Endothelial cell of umbilical vein (primary cell): ENCODE measurements at regions of chr20 and their contacts with region 1.

Region 1: GRCh38 chr20:6265204-6265904 is 142.5 kb upstream of the FERMT1 start:
- DNase-seq: peak; percentile 82
- H3K4me3 ChIP-seq: peak overlapping the region in 1 of 3 experiments; percentile 59
- H3K27ac ChIP-seq: peak overlapping the region; percentile 18
- H3K4me1 ChIP-seq: peaks cover 10% of the 10 kb centered on the region
- H3K27me3 ChIP-seq: peaks cover 0 to 4% of the 10 kb centered on the region in 2 experiments
- CTCF ChIP-seq: peak; percentile 11 to 29
- POLR2A ChIP-seq: no peak

Region 2: DNA sequence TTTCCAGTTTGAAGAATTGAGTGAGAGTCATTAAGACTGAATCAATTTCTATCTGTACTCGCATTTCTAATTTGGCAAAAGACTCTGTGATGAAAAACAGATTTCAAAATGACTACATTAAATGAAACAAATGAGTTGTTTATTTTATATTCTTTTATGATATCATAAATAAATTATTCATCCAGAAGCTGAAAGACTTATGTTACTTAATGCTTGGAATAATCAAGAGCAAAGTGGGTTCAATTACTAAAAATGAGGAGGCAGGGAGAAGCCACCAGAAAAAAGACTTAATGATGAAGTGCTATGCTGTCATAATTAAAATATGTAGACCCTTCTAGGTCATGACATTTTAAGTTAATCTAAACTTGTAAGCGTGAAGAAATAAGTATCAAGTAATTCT is 12.0 kb before region 1 on chr20:
- CTCF ChIA-PET with region 1: interaction called, 14 read pairs
- POLR2A ChIA-PET with region 1: no interaction called
- dilution Hi-C with region 1: no loop called
- intact Hi-C with region 1: no loop called
- DNase-seq: no peak
- H3K4me3 ChIP-seq: no peak overlapping the region
- H3K27ac ChIP-seq: no peak overlapping the region
- H3K4me1 ChIP-seq: no peaks in the 10 kb centered on the region
- H3K27me3 ChIP-seq: peaks cover 2 to 7% of the 10 kb centered on the region in 2 experiments
- CTCF ChIP-seq: no peak
- POLR2A ChIP-seq: no peak

Region 3: GRCh38 chr20:6388671-6389197 is 123.4 kb after region 1 on chr20:
- CTCF ChIA-PET with region 1: no interaction called
- POLR2A ChIA-PET with region 1: no interaction called
- dilution Hi-C with region 1: no loop called
- intact Hi-C with region 1: no loop called
- DNase-seq: no peak
- H3K4me3 ChIP-seq: no peak overlapping the region
- H3K27ac ChIP-seq: no peak overlapping the region
- H3K4me1 ChIP-seq: no peaks in the 10 kb centered on the region
- H3K27me3 ChIP-seq: no peaks in the 10 kb centered on the region
- CTCF ChIP-seq: no peak
- POLR2A ChIP-seq: no peak

Region 4: GRCh38 chr20:6630514-6630913 is 365.2 kb after region 1 on chr20:
- CTCF ChIA-PET with region 1: interaction called, 12 read pairs
- POLR2A ChIA-PET with region 1: no interaction called
- dilution Hi-C with region 1: no loop called
- intact Hi-C with region 1: no loop called
- DNase-seq: peak; percentile 34
- H3K4me3 ChIP-seq: no peak overlapping the region
- H3K27ac ChIP-seq: no peak overlapping the region
- H3K4me1 ChIP-seq: no peaks in the 10 kb centered on the region
- H3K27me3 ChIP-seq: no peaks in the 10 kb centered on the region
- CTCF ChIP-seq: no peak
- POLR2A ChIP-seq: no peak

Region 5: DNA sequence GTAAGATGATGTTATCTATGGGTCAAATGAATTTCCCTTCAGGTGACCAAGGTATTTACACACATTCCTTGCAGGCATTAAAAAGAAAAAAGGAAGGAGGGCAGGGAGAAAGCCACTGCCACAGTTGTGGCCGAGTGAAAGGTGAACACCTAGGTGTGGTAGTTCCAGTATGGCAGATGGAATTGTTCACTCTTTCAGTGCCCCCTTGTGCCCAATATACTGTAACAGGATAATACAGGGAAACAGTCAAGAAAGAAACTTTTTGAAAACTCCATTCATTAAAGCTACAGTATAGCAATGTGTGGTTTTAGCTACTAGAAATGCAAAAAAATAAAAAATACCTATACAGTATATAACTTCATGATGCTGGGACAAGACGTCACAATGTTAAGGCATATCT is 554.3 kb after region 1 on chr20:
- CTCF ChIA-PET with region 1: interaction called, 20 read pairs
- POLR2A ChIA-PET with region 1: no interaction called
- dilution Hi-C with region 1: no loop called
- intact Hi-C with region 1: loop called (anchors 1 kb)
- DNase-seq: peak; percentile 46
- H3K4me3 ChIP-seq: no peak overlapping the region
- H3K27ac ChIP-seq: no peak overlapping the region
- H3K4me1 ChIP-seq: no peaks in the 10 kb centered on the region
- H3K27me3 ChIP-seq: peaks cover 0 to 2% of the 10 kb centered on the region in 2 experiments
- CTCF ChIP-seq: peak; percentile 16 to 27
- POLR2A ChIP-seq: no peak